Right cardiac atrium (tissue), 5 donors: ENCODE measurements at regions of chr3 and their contacts with region 1.

Region 1: GRCh38 chr3:9731206-9732079 is at the start of gene BRPF1:
- DNase-seq: peak; percentile 99 to 100 (median 100)
- ATAC-seq: peak; percentile 99
- H3K4me3 ChIP-seq: peak within 1 kb of the TSS; percentile 92
- H3K27ac ChIP-seq: peak within 1 kb of the TSS; percentile 95
- H3K4me1 ChIP-seq: peaks cover 8% of the 10 kb centered on the region
- H3K27me3 ChIP-seq: no peaks in the 10 kb centered on the region
- total RNA-seq, gene BRPF1: 9.2 to 12.0 (median 11.7) TPM

Region 2: GRCh38 chr3:9503283-9503682 is 228.2 kb before region 1 on chr3:
- intact Hi-C with region 1: loop called in 2 of 4 experiments (anchors 5 to 10 kb)
- DNase-seq: peak; percentile 40 to 86 (median 77)
- ATAC-seq: peak; percentile 20 to 28
- H3K4me3 ChIP-seq: no peak overlapping the region
- H3K27ac ChIP-seq: no peak overlapping the region
- H3K4me1 ChIP-seq: no peaks in the 10 kb centered on the region
- H3K27me3 ChIP-seq: no peaks in the 10 kb centered on the region

Region 3: DNA sequence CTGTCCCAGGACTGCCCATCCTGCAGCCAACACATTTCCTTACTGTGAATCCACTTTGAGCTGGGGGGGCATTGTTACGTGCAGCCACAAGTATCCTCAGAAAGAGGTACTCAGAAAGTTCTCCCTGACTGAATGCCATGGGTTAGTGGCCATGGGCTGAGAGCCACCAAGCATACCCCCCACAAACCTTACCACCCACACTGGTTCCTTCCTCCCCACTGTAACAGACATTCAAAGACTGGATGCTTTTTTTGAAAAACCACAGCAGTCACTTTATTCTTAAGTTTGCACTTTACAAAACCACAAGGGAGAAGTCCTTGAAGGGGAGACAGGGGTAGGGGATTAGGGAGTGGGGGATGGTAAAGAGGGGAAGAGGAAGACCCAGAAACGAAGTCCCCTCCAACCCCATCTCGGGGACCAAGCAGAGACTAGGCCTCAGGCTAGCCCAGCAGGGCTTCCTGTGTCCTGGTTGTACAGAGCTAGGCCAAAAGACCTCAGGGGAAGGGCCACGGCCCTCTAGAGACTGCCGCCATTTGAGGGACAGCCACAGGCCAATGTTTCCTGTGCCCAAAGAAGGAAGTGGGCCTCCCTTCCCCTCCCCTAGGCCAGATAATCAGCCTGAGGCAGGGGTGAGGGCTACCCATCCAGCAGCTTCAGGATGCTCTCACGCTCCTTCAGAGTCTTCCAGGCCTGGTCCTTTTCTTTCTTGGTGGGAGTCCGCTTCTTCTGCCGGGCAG is 48.4 kb after region 1 on chr3:
- intact Hi-C with region 1: loop called in 1 of 4 experiments (anchors 10 kb)
- DNase-seq: no peak
- ATAC-seq: peak; percentile 28 to 37
- H3K4me3 ChIP-seq: no peak overlapping the region
- H3K27ac ChIP-seq: no peak overlapping the region
- H3K4me1 ChIP-seq: peaks cover 4% of the 10 kb centered on the region
- H3K27me3 ChIP-seq: no peaks in the 10 kb centered on the region